Mammary epithelial cell (primary cell): ENCODE measurements at regions of chr10 and their contacts with region 1.

Region 1: GRCh38 chr10:108204479-108205305 is 1040.2 kb upstream of the SORCS1 start:
- DNase-seq: peak; percentile 55
- H3K4me3 ChIP-seq: no peak overlapping the region
- H3K27ac ChIP-seq: no peak overlapping the region
- H3K4me1 ChIP-seq: no peaks in the 10 kb centered on the region
- H3K27me3 ChIP-seq: no peaks in the 10 kb centered on the region
- CTCF ChIP-seq: peak; percentile 94 to 99

Region 2: GRCh38 chr10:106705681-106706100 is 1499.0 kb before region 1 on chr10:
- CTCF ChIA-PET with region 1: interaction called, 8 read pairs
- dilution Hi-C with region 1: no loop called
- in situ Hi-C with region 1: no loop called
- intact Hi-C with region 1: loop called (anchors 10 kb)
- DNase-seq: peak; percentile 31
- H3K4me3 ChIP-seq: no peak overlapping the region
- H3K27ac ChIP-seq: no peak overlapping the region
- H3K4me1 ChIP-seq: no peaks in the 10 kb centered on the region
- H3K27me3 ChIP-seq: no peaks in the 10 kb centered on the region
- CTCF ChIP-seq: peak; percentile 88

Region 3: GRCh38 chr10:107133656-107134055 is 1071.0 kb before region 1 on chr10:
- CTCF ChIA-PET with region 1: no interaction called
- dilution Hi-C with region 1: no loop called
- in situ Hi-C with region 1: no loop called
- intact Hi-C with region 1: no loop called
- DNase-seq: no peak
- H3K4me3 ChIP-seq: no peak overlapping the region
- H3K27ac ChIP-seq: no peak overlapping the region
- H3K4me1 ChIP-seq: no peaks in the 10 kb centered on the region
- H3K27me3 ChIP-seq: no peaks in the 10 kb centered on the region
- CTCF ChIP-seq: no peak

Region 4: DNA sequence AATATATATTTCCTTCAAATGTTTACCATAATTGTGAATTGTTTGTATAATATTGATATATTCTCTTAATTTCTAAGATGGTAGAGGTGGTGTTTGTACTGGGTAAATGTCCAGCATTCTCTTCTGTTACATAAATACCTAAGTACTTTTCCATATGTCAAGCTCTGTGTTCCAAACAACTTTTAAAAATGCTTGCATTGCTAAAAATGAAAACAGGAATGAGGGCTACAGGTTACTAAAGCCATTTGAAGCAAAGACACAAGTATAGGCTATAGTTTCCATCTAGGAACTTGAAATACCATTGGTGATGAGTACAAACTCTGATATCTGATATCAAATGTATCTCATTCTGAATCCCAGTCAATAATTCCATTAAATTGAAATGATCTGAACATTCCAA is 806.6 kb before region 1 on chr10:
- CTCF ChIA-PET with region 1: interaction called, 15 read pairs
- dilution Hi-C with region 1: no loop called
- in situ Hi-C with region 1: no loop called
- intact Hi-C with region 1: no loop called
- DNase-seq: no peak
- H3K4me3 ChIP-seq: no peak overlapping the region
- H3K27ac ChIP-seq: no peak overlapping the region
- H3K4me1 ChIP-seq: no peaks in the 10 kb centered on the region
- H3K27me3 ChIP-seq: no peaks in the 10 kb centered on the region
- CTCF ChIP-seq: no peak

Region 5: DNA sequence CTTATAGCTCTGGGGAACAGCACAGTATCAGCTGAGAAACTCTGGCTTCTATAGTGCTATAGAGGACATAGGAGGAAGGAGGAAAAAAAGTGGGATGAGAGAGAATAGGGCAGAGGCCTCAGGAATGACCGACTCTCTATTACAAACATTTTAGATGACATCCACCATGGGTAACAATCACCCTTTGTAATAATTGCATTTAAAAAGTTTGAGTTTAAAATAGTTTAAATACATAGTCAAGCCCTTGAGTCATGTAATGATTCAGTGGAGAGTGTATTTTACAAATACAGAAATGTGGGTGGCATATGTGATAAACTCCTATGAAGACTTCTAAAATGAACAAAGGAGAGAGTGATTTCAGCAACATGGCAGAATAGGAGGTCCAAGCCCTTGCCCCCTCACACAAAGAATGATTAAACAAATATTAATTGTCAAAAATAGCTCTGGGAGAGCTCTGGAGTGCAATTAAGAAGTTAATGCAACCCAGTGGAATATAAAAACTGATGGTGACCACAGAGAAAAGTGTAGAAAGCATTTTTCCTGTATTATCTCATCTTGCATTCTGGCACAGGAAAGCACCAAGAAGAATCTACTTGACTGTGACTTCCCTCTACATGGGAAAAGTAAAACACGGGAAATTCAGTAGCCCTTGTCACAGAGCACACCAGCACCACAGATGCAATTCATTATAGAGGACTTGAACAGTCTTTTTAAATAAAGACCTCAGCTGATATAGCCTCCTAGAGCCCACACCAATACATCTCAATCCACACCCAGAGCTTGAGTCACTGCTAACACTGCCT is 471.2 kb before region 1 on chr10:
- CTCF ChIA-PET with region 1: interaction called, 22 read pairs
- dilution Hi-C with region 1: no loop called
- in situ Hi-C with region 1: no loop called
- intact Hi-C with region 1: no loop called
- DNase-seq: peak; percentile 77
- H3K4me3 ChIP-seq: no peak overlapping the region
- H3K27ac ChIP-seq: peak overlapping the region; percentile 29
- H3K4me1 ChIP-seq: peaks cover 34% of the 10 kb centered on the region
- H3K27me3 ChIP-seq: no peaks in the 10 kb centered on the region
- CTCF ChIP-seq: no peak

Region 6: GRCh38 chr10:107814865-107815487 is 389.7 kb before region 1 on chr10:
- CTCF ChIA-PET with region 1: no interaction called
- dilution Hi-C with region 1: no loop called
- in situ Hi-C with region 1: no loop called
- intact Hi-C with region 1: loop called (anchors 5 kb)
- DNase-seq: peak; percentile 63
- H3K4me3 ChIP-seq: no peak overlapping the region
- H3K27ac ChIP-seq: no peak overlapping the region
- H3K4me1 ChIP-seq: no peaks in the 10 kb centered on the region
- H3K27me3 ChIP-seq: no peaks in the 10 kb centered on the region
- CTCF ChIP-seq: peak; percentile 84 to 91

Region 7: GRCh38 chr10:107914450-107915214 is 290.1 kb before region 1 on chr10:
- CTCF ChIA-PET with region 1: interaction called, 3 read pairs
- dilution Hi-C with region 1: no loop called
- in situ Hi-C with region 1: no loop called
- intact Hi-C with region 1: loop called (anchors 1 kb)
- DNase-seq: peak; percentile 30
- H3K4me3 ChIP-seq: peak overlapping the region; percentile 59 to 78 (median 59)
- H3K27ac ChIP-seq: peak overlapping the region; percentile 52
- H3K4me1 ChIP-seq: peaks cover 12% of the 10 kb centered on the region
- H3K27me3 ChIP-seq: no peaks in the 10 kb centered on the region
- CTCF ChIP-seq: peak in 1 of 2 donors; percentile 8

Region 8: GRCh38 chr10:108064746-108065260 is 139.9 kb before region 1 on chr10:
- CTCF ChIA-PET with region 1: no interaction called
- dilution Hi-C with region 1: no loop called
- in situ Hi-C with region 1: no loop called
- intact Hi-C with region 1: no loop called
- DNase-seq: no peak
- H3K4me3 ChIP-seq: no peak overlapping the region
- H3K27ac ChIP-seq: no peak overlapping the region
- H3K4me1 ChIP-seq: peaks cover 17% of the 10 kb centered on the region
- H3K27me3 ChIP-seq: no peaks in the 10 kb centered on the region
- CTCF ChIP-seq: no peak

Region 9: GRCh38 chr10:108112219-108112618 is 92.5 kb before region 1 on chr10:
- CTCF ChIA-PET with region 1: interaction called, 5 read pairs
- dilution Hi-C with region 1: no loop called
- in situ Hi-C with region 1: no loop called
- intact Hi-C with region 1: loop called (anchors 5 kb)
- DNase-seq: peak; percentile 8
- H3K4me3 ChIP-seq: no peak overlapping the region
- H3K27ac ChIP-seq: no peak overlapping the region
- H3K4me1 ChIP-seq: no peaks in the 10 kb centered on the region
- H3K27me3 ChIP-seq: no peaks in the 10 kb centered on the region
- CTCF ChIP-seq: peak; percentile 44 to 47